Posterior vena cava (tissue), 2 donors: ENCODE measurements at regions of chr5 and their contacts with region 1.

Region 1: DNA sequence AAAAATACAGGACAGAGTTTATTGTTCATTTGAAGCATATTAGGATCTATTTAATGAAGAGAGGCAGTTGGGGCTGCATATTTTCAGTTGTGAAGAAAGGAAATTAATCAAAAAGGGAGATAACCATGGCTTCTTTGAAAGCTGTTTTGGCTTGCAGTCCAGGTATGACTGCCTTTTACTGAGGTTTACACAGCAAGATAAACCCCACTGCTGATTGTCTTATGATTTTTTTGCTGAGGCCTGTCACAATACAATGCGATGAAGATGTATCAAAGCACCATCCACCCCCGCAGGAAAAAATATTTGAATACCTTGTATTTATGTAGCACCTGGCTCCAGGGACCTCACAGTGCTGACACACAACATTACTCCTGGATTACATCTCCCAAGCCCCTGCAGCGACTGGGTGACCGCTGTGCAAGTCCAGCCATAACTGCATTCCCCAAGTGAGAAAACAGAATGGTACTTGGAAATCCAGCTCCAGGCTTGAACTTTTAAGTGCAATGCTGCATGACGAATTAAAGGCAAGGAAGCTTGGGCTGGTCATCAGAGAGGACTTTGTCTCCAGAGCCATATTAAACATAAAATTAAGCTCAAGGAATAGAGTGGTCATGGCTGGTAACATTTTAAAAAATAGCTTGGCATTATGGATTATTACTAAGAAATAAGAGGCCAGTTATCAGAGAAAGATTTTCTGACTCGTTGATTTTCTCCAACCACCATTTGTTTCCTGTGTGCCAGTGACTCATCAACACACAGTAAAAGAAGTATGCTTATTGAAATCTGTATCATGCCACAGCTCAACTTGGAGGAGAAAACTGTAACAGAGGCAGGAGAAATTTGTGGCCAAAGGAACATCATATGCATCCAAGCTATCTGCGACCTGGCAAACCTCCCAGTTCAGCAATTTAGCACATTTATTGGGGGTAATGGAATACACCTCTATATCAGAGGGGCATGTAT is 374.2 kb downstream of the MAN2A1 start:
- DNase-seq: no peak

Region 2: DNA sequence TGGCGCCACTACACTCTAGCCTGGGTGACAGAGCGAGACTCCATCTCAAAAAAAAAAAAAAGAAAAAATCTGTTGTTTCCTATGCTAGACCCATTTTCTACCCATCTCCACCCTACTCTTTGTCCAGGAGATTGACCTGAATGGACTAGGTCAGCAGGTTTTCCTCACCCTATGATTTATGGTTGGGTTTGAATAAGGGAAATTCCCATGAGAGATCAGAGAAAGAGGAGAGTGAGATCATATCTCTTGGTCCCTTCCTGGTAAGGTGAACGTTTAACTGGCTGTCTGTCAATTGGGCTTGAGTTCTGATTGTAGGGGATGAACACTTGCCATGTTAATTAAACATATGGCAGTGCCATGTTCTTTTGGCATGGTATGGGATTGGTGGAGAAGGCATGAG is 13.2 kb after region 1 on chr5:
- intact Hi-C with region 1: loop called in 1 of 2 experiments (anchors 1 kb)
- DNase-seq: no peak